ENCODE measurements at regions of chr3 and their contacts with region 1.

Region 1: GRCh38 chr3:190384241-190384863 is 3.6 kb upstream of the CLDN16 start:
- DNase-seq: peak; percentile 83
- ATAC-seq: peak; percentile 100
- H3K4me3 ChIP-seq: no peak overlapping the region
- H3K27ac ChIP-seq: no peak overlapping the region
- H3K4me1 ChIP-seq: peaks cover 30% of the 10 kb centered on the region
- H3K27me3 ChIP-seq: 0 out of 5 replicates have a peak, but pooled peaks cover 0 to 1% of the 10 kb centered on the region in 2 experiments
- CTCF ChIP-seq: peak; percentile 89
- EP300 ChIP-seq: no peak
- POLR2A ChIP-seq: no peak
- RAD21 ChIP-seq: peak; percentile 84

Region 2: DNA sequence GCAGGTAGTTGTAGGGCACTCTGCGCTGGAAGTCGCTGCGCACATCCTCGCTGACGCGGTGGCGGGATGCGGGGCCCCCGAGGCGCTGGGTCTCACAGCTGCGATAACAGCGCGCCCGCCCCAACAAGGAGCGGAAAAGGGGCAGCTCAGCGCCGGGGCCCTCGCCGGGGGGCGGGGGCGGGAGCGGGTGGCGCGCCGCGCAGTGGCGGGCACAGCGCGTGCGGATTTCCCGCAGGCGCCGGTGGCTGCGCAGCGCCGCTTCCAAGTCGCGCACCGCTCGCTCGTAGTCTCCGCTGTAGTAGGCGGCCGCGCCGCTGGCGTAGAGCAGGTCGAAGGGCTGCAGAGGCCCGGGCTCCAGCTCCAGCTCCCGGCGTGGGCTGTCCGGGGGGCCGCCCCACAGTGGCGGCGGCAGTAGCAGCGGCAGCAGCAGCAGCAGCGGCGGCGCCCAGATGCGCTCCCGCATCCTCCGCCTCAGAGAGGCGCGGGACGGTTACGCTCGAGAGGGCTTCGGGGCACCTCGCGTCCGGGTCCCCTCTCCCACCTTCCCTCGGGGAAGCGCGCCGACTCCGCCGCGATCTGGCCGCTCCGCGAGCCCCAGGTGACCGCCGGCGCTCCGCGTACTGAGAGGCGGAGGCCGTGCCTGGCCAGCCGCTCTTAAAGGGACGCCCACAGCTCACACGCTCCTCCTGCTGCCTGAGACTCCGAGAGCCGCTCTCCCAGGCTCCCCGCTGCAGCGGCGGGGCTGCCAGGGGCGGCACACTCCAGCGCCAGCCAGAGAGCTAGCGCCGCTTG is 263.9 kb before region 1 on chr3 and contains the start of gene P3H2:
- CTCF ChIA-PET with region 1: no interaction called
- POLR2A ChIA-PET with region 1: no interaction called
- in situ Hi-C with region 1: no loop called
- intact Hi-C with region 1: loop called (anchors 10 kb)
- DNase-seq: peak; percentile 66
- ATAC-seq: peak; percentile 100
- H3K4me3 ChIP-seq: peak within 1 kb of the TSS; percentile 58 to 70 (median 65); a peak in 5 of 6 replicates
- H3K27ac ChIP-seq: no peak within 1 kb of the TSS
- H3K4me1 ChIP-seq: no peaks in the 10 kb centered on the region
- H3K27me3 ChIP-seq: peaks cover 0 to 17% of the 10 kb centered on the region in 2 experiments; a peak in 4 of 5 replicates
- CTCF ChIP-seq: peak; percentile 63
- EP300 ChIP-seq: no peak
- POLR2A ChIP-seq: no peak
- RAD21 ChIP-seq: peak; percentile 35
- total RNA-seq, gene P3H2: not detected in 2 replicates

Region 3: GRCh38 chr3:190224863-190225692 is 159.3 kb before region 1 on chr3:
- CTCF ChIA-PET with region 1: interaction called, 4 read pairs
- POLR2A ChIA-PET with region 1: no interaction called
- in situ Hi-C with region 1: loop called (anchors 10 kb)
- intact Hi-C with region 1: loop called (anchors 1 kb)
- DNase-seq: peak; percentile 29
- ATAC-seq: peak; percentile 70
- H3K4me3 ChIP-seq: no peak overlapping the region
- H3K27ac ChIP-seq: no peak overlapping the region
- H3K4me1 ChIP-seq: no peaks in the 10 kb centered on the region
- H3K27me3 ChIP-seq: peaks cover 0 to 4% of the 10 kb centered on the region in 2 experiments; a peak in 1 of 5 replicates
- CTCF ChIP-seq: peak; percentile 60
- EP300 ChIP-seq: no peak
- POLR2A ChIP-seq: no peak
- RAD21 ChIP-seq: peak; percentile 29; the same call in 1 of the 2 replicates

Region 4: DNA sequence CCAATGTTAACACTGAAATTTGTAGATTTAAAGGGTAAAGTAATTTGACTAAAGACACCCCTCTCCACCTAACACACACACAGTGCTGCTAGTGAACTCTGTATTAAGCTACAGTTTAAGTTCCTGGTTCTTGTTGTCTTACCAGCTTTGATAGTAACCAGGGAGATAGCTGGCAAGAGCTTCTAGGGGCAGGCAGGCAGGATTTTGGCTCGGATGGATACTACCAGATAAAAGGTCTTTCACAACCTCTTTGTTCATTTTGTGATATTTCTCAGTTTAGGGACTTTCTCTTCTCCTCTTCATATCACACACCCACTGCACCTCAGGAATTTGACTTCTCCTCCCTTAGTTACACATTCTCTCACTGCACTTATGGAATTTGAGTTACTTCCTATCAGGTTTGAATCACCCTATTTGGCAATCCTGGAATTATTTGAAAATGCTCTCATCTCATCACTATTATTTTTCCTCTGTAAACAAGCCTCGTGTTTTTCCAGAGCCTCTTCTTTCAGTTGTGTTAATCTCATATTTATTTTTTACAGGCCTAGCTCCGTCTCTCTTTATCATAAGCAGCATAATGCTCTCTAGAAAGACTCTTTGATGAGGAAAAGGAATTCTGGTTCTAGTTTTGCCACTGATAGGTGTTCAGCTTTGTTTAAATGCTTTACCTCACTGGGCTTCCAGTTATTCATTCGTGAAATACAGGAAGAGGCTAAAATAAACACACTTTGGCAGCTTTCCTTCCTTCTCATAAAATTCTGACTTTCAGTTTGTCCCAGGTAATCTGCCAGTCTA is 39.1 kb before region 1 on chr3:
- CTCF ChIA-PET with region 1: no interaction called
- POLR2A ChIA-PET with region 1: interaction called, 7 read pairs
- in situ Hi-C with region 1: no loop called
- intact Hi-C with region 1: loop called (anchors 2 kb)
- DNase-seq: peak; percentile 98
- ATAC-seq: peak; percentile 96
- H3K4me3 ChIP-seq: peak overlapping the region; percentile 35 to 45 (median 38); a peak in 5 of 6 replicates
- H3K27ac ChIP-seq: peak overlapping the region; percentile 89
- H3K4me1 ChIP-seq: peaks cover 35% of the 10 kb centered on the region
- H3K27me3 ChIP-seq: no peaks in the 10 kb centered on the region
- CTCF ChIP-seq: no peak
- EP300 ChIP-seq: peak in 1 of 2 experiments; percentile 87; a peak in 1 of 4 replicates
- POLR2A ChIP-seq: peak in 1 of 2 experiments; percentile 42; a peak in 1 of 4 replicates
- RAD21 ChIP-seq: no peak

Region 5: GRCh38 chr3:190424478-190425439 is 40.4 kb after region 1 on chr3:
- CTCF ChIA-PET with region 1: interaction called, 4 read pairs
- POLR2A ChIA-PET with region 1: no interaction called
- in situ Hi-C with region 1: no loop called
- intact Hi-C with region 1: loop called (anchors 1 kb)
- DNase-seq: peak; percentile 77
- ATAC-seq: peak; percentile 96
- H3K4me3 ChIP-seq: no peak overlapping the region
- H3K27ac ChIP-seq: no peak overlapping the region
- H3K4me1 ChIP-seq: no peaks in the 10 kb centered on the region
- H3K27me3 ChIP-seq: no peaks in the 10 kb centered on the region
- CTCF ChIP-seq: peak; percentile 68
- EP300 ChIP-seq: peak in 1 of 2 experiments; percentile 27; a peak in 1 of 4 replicates
- POLR2A ChIP-seq: no peak
- RAD21 ChIP-seq: peak; percentile 59

Region 6: GRCh38 chr3:190481779-190482178 is 97.4 kb after region 1 on chr3:
- CTCF ChIA-PET with region 1: no interaction called
- POLR2A ChIA-PET with region 1: no interaction called
- in situ Hi-C with region 1: no loop called
- intact Hi-C with region 1: no loop called
- DNase-seq: no peak
- ATAC-seq: no peak
- H3K4me3 ChIP-seq: no peak overlapping the region
- H3K27ac ChIP-seq: no peak overlapping the region
- H3K4me1 ChIP-seq: no peaks in the 10 kb centered on the region
- H3K27me3 ChIP-seq: no peaks in the 10 kb centered on the region
- CTCF ChIP-seq: no peak
- EP300 ChIP-seq: no peak
- POLR2A ChIP-seq: no peak
- RAD21 ChIP-seq: no peak

Region 7: DNA sequence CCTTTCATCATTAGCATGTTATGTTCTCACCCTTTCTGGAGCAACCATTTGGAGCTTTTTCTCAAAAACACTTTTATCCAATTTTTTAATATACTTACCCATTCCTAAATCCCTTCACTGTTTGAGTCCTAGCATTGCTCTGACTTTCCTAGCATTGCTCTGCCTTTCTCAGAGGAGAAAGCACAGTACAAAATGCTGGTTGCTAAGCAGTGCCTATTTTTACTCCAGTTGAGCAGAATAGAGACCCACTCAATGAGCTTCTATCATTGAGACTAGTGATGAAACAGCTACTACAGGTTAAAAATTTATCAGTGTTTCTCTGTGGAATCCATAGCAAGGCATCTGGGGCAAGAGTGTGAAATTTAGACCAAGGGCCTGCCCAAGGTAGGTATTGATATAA is 107.8 kb after region 1 on chr3:
- CTCF ChIA-PET with region 1: no interaction called
- POLR2A ChIA-PET with region 1: no interaction called
- in situ Hi-C with region 1: no loop called
- intact Hi-C with region 1: no loop called
- DNase-seq: no peak
- ATAC-seq: no peak
- H3K4me3 ChIP-seq: no peak overlapping the region
- H3K27ac ChIP-seq: no peak overlapping the region
- H3K4me1 ChIP-seq: no peaks in the 10 kb centered on the region
- H3K27me3 ChIP-seq: peaks cover 0 to 9% of the 10 kb centered on the region in 2 experiments; a peak in 2 of 5 replicates
- CTCF ChIP-seq: no peak
- EP300 ChIP-seq: no peak
- POLR2A ChIP-seq: no peak
- RAD21 ChIP-seq: no peak

Region 8: GRCh38 chr3:191051037-191051436 is 666.7 kb after region 1 on chr3:
- CTCF ChIA-PET with region 1: no interaction called
- POLR2A ChIA-PET with region 1: no interaction called
- in situ Hi-C with region 1: no loop called
- intact Hi-C with region 1: loop called (anchors 10 kb)
- DNase-seq: peak; percentile 9
- ATAC-seq: peak; percentile 55; the same call in 2 of the 3 replicates
- H3K4me3 ChIP-seq: no peak overlapping the region
- H3K27ac ChIP-seq: no peak overlapping the region
- H3K4me1 ChIP-seq: no peaks in the 10 kb centered on the region
- H3K27me3 ChIP-seq: no peaks in the 10 kb centered on the region
- CTCF ChIP-seq: peak; percentile 51; the same call in 1 of the 2 replicates
- EP300 ChIP-seq: no peak
- POLR2A ChIP-seq: no peak
- RAD21 ChIP-seq: no peak

Measured in HepG2 (cell line).